ENCODE measurements at regions of chr1 and their contacts with region 1.

Region 1: DNA sequence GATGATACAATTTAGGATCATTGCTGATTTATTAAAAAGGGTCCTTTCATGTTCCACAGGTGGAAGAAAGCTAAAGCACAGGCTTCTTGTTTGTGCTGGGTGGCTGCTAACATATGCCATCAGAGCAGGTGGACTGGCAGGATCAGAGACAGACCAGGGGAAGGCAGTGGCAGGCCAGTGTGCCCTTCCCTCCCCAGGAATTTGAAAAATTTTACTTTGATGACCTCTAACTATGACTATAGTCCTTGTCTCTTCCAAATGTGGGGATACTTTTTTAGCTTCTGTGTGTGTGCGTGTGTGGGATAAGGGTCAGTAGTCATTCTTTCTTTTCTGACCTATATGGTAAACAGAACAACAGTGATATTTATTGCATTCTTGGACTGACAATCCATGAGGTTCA is 49.9 kb downstream of the LHX9 start:
- DNase-seq: no peak
- ATAC-seq: no peak
- H3K4me3 ChIP-seq: no peak overlapping the region
- H3K4me3 Mint-ChIP-seq: no peak overlapping the region
- H3K27ac ChIP-seq: no peak overlapping the region
- H3K27ac Mint-ChIP-seq: no peak overlapping the region
- H3K4me1 ChIP-seq: no peaks in the 10 kb centered on the region
- H3K4me1 Mint-ChIP-seq: no peaks in the 10 kb centered on the region
- H3K27me3 ChIP-seq: no peaks in the 10 kb centered on the region
- H3K27me3 Mint-ChIP-seq: peaks cover 0 to 33% (median 6%) of the 10 kb centered on the region in 5 donors

Region 2: DNA sequence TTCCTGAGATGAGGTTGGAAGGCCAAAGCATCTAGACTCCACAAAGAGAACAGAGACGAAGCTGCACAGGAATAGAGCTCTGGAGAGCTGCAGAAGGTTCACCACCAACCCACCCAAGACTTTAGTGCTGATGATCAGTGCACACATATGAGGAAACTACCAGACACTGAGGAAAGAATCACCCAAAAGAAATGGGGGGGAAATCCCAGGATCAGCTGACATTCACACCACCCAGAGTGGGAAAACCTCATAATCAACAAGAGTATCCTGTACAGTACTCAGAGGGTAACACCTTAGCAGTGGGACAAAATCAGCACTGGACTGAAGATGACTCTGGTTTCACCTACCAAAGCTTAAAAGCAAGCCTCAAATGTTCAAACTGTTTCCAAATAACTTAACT is 228.1 kb before region 1 on chr1:
- CTCF ChIA-PET with region 1: no interaction called
- POLR2A ChIA-PET with region 1: no interaction called
- intact Hi-C with region 1: no loop called
- DNase-seq: no peak
- ATAC-seq: peak; percentile 38
- H3K4me3 ChIP-seq: no peak overlapping the region
- H3K4me3 Mint-ChIP-seq: peak overlapping the region in 1 of 10 donors; percentile 25
- H3K27ac ChIP-seq: no peak overlapping the region
- H3K27ac Mint-ChIP-seq: peak overlapping the region in 1 of 9 donors; percentile 14
- H3K4me1 ChIP-seq: no peaks in the 10 kb centered on the region
- H3K4me1 Mint-ChIP-seq: peaks cover 31 to 78% (median 62%) of the 10 kb centered on the region in 7 donors
- H3K27me3 ChIP-seq: no peaks in the 10 kb centered on the region
- H3K27me3 Mint-ChIP-seq: no peaks in the 10 kb centered on the region

Region 3: DNA sequence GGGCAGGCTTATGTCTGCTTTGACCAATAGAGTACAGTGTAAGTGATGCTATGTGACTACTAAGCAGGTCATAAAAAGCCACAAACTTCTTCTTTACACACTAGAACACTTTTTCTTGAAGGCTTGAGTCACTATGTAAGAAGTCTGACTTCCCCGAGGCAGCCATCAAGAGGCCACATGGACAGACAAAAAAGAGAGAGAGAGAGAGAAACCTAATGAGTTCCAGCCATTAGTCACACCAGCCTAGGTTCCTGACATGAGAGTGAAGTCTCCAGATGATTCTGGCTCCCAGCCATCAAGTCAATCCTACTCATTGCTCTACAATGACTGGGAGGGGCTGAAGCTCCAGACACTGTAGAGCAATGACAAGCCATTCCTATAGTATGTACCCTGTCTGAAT is 51.5 kb after region 1 on chr1:
- CTCF ChIA-PET with region 1: no interaction called
- POLR2A ChIA-PET with region 1: no interaction called
- intact Hi-C with region 1: loop called in 1 of 2 experiments (anchors 1 kb)
- DNase-seq: no peak
- ATAC-seq: no peak
- H3K4me3 ChIP-seq: no peak overlapping the region
- H3K4me3 Mint-ChIP-seq: no peak overlapping the region
- H3K27ac ChIP-seq: no peak overlapping the region
- H3K27ac Mint-ChIP-seq: no peak overlapping the region
- H3K4me1 ChIP-seq: no peaks in the 10 kb centered on the region
- H3K4me1 Mint-ChIP-seq: no peaks in the 10 kb centered on the region
- H3K27me3 ChIP-seq: no peaks in the 10 kb centered on the region
- H3K27me3 Mint-ChIP-seq: peaks cover 0 to 10% (median 7%) of the 10 kb centered on the region in 5 donors